Heart left ventricle (tissue), 16 donors: ENCODE measurements at regions of chr21 and their contacts with region 1.

Region 1: GRCh38 chr21:36060159-36060921 is at the start of gene SETD4:
- DNase-seq: peak; percentile 91 to 97 (median 93)
- ATAC-seq: peak; percentile 94 to 97 (median 96)
- H3K4me3 ChIP-seq: peak within 1 kb of the TSS; percentile 58 to 96 (median 82)
- H3K27ac ChIP-seq: peak within 1 kb of the TSS; percentile 82 to 97 (median 95)
- H3K4me1 ChIP-seq: peaks cover 0 to 31% (median 17%) of the 10 kb centered on the region in 12 donors
- H3K27me3 ChIP-seq: no peaks in the 10 kb centered on the region
- CTCF ChIP-seq: no peak
- POLR2A ChIP-seq: peak in 1 of 2 donors; percentile 89
- total RNA-seq, gene SETD4: 4.5 to 12.7 (median 10.7) TPM

Region 2: DNA sequence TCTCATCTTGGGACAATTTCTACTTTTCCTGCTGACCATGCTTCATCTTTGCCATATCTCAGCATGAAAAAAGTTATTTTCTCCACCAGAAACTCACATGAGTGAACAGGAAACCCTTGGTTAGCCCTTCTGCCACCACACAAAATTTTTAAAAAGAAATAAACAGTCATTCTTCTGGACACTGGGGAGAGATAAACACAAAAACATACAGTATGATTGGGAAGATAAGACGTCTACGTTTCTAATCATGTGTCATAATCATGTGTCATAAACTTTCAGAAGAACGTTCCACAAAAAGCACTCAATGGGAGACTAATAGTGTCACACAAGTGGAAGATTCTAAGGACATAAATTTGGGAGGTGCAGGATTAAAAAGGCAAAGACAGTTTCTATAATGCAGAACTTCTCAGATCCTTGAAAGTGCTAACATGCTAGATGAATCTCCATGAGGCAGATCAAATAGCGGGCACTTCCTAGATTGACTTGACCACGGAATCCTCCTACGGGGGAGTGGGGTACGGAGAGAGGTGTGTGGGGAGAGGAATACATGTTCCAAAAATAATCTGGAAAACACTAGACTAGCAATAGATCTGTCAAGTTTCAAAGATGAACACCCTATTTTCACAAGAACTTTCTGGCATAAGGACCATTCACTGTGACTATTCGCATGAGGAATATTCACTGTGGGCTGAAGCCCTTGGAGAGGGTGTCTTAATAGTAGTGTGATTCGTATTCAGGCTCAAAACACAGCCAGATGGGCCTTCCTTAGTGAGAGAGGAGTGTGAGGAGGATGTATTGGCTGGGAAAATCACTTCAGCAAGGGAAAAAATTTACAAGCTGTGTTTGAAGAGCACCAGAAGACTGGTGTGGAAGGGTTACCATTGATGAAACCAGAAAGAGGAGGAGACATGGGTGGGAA is 206.8 kb before region 1 on chr21:
- intact Hi-C with region 1: no loop called
- DNase-seq: no peak
- ATAC-seq: no peak
- H3K4me3 ChIP-seq: no peak overlapping the region
- H3K27ac ChIP-seq: peak overlapping the region in 5 of 12 donors; percentile 0 to 44 (median 24)
- H3K4me1 ChIP-seq: peaks cover 0 to 24% (median 5%) of the 10 kb centered on the region in 12 donors
- H3K27me3 ChIP-seq: peaks cover 0 to 3% (median 0%) of the 10 kb centered on the region in 9 donors
- CTCF ChIP-seq: no peak
- POLR2A ChIP-seq: no peak

Region 3: GRCh38 chr21:36092676-36093075 is 32.3 kb after region 1 on chr21:
- intact Hi-C with region 1: no loop called
- DNase-seq: no peak
- ATAC-seq: no peak
- H3K4me3 ChIP-seq: no peak overlapping the region
- H3K27ac ChIP-seq: no peak overlapping the region
- H3K4me1 ChIP-seq: peaks cover 0 to under 1% (median 0%) of the 10 kb centered on the region in 12 donors
- H3K27me3 ChIP-seq: no peaks in the 10 kb centered on the region
- CTCF ChIP-seq: no peak
- POLR2A ChIP-seq: no peak

Region 4: GRCh38 chr21:36104317-36105300 is 44.3 kb after region 1 on chr21:
- intact Hi-C with region 1: loop called in 2 of 10 experiments (anchors 5 to 10 kb)
- DNase-seq: peak in 4 of 5 donors; percentile 33 to 73 (median 58)
- ATAC-seq: peak in 2 of 4 donors; percentile 48 to 68
- H3K4me3 ChIP-seq: peak overlapping the region in 5 of 12 donors; percentile 14 to 28 (median 23)
- H3K27ac ChIP-seq: no peak overlapping the region
- H3K4me1 ChIP-seq: peaks cover 0 to 6% (median 1%) of the 10 kb centered on the region in 12 donors
- H3K27me3 ChIP-seq: peaks cover 0 to 50% (median 7%) of the 10 kb centered on the region in 9 donors
- CTCF ChIP-seq: peak; percentile 40 to 65 (median 54)
- POLR2A ChIP-seq: no peak

Region 5: DNA sequence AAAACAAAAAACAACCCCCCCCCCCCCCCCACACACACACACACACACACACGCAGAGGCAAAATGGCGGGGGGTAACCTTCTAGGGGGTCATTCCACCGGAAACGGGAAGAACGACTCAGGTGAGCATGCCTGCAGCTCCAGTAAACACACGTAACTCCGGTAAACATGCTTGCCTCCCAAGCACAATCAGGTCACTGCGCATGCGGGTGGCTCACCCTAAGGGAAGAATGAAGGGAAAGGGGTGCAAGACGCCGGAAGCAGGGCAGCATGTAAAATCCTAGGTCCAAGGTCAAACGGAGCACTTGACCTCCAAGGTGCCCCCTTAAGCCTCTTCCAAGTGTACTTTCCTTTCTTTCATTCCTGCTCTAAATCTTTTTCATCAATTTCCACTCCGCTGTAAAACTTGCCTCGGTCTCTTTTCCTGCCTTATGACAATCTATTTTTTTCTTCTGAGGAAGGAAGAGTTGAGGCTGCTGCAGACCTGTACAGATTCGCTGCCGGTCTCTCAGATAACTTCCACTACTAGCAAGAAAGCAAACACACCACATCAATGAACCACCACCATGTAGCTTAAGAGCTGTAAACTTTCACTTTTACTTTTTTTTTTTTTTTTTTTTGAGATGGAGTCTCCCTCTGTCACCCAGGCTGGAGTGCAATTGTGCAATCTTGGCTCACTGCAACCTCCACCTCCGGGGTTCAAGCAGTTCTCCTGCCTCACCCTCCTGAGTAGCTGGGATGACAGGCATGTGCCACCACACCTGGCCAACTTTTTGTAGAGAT is 53.5 kb after region 1 on chr21:
- intact Hi-C with region 1: loop called in 7 of 10 experiments (anchors 2 to 10 kb)
- DNase-seq: no peak
- ATAC-seq: peak in 1 of 4 donors; percentile 22
- H3K4me3 ChIP-seq: peak overlapping the region in 1 of 12 donors; percentile 60
- H3K27ac ChIP-seq: peak overlapping the region in 1 of 12 donors; percentile 57
- H3K4me1 ChIP-seq: peaks cover 0 to 8% (median 1%) of the 10 kb centered on the region in 12 donors
- H3K27me3 ChIP-seq: no peaks in the 10 kb centered on the region
- CTCF ChIP-seq: no peak
- POLR2A ChIP-seq: no peak